ENCODE measurements at regions of chr4 and their contacts with region 1.

Region 1: GRCh38 chr4:173169428-173170181 is 994 bp downstream of the GALNT7 start:
- DNase-seq: peak; percentile 67
- ATAC-seq: peak; percentile 77 to 83

Region 2: DNA sequence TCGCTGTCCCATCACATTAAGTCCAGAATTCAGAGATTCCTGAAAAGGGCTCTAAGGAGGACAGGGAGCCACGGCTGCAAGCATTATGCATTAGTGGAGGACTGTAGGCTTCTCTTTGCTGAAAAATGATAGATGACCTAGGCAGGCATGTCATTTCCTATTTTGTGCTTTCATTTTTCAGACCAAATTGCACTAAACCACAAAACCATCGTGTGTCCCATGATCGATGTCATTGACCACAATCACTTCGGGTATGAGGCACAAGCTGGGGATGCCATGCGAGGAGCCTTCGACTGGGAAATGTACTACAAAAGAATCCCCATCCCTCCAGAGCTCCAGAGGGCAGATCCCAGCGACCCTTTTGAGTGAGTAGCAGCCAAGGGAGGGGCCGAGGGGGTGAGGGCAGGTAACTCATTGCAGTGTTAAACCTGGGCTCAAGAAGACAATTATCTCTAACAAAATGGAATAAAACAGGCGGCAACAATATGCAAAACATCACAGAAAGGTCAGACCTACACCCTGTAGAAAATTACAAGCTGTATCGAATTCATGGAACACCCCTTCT is 356.2 kb before region 1 on chr4:
- intact Hi-C with region 1: no loop called
- DNase-seq: no peak
- ATAC-seq: no peak

Region 3: GRCh38 chr4:173025131-173025530 is 144.5 kb before region 1 on chr4:
- intact Hi-C with region 1: loop called in 1 of 2 experiments (anchors 10 kb)
- DNase-seq: no peak
- ATAC-seq: peak in 1 of 2 donors; percentile 78

Region 4: DNA sequence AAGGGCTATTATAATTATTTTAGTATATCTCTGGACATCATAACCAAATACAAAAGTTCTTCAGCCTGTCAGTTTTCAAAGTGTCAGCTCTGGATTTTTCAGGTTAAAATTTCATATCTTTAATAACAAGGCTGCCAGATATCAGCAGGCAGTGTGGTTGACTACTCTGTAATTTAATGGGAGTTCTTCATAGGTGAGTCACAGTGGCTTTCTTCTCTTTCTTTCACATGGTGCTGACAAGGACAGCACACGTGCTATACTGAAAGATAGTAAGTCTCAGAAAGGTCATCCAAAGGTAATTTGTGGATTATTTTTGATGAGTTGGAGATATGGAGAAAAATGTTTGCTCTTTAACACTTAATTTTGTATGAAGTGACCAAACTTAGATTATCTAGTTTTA is 42.2 kb after region 1 on chr4:
- intact Hi-C with region 1: no loop called
- DNase-seq: no peak
- ATAC-seq: peak in 1 of 2 donors; percentile 96

Region 5: DNA sequence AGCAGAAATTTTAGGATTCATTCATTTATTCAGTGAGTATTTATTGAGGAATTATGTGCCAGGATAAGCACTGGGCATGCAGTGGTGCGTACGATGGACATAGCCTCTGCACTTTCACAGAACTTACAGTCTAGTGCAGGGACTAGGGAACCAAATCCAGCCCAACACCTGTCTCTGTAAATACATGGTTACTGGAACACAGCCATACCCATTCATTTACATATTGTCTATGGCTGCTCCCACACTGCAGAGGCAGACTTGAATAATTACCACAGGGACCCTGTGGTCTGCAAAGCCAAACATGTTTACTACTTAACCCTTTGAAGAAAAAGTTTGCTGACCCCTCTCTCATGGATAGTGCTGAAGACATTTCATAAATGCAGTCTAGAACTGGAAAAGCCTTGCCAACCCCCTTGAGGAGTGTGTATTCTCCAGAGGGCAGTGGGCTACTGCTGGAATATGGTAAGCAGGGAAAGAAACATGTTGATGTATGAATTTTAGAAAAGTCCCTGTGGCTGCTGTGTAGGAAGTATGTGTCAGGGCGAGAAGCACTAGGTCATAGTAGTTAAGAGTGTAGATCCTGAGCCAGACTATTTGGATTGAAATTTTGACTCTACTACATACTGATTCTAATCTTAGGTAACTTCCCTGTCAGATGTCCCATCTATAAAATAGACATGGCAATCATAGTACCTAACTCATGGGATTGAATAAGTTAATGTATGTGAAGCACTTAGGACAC is 74.5 kb after region 1 on chr4:
- intact Hi-C with region 1: no loop called
- DNase-seq: no peak
- ATAC-seq: no peak

Region 6: DNA sequence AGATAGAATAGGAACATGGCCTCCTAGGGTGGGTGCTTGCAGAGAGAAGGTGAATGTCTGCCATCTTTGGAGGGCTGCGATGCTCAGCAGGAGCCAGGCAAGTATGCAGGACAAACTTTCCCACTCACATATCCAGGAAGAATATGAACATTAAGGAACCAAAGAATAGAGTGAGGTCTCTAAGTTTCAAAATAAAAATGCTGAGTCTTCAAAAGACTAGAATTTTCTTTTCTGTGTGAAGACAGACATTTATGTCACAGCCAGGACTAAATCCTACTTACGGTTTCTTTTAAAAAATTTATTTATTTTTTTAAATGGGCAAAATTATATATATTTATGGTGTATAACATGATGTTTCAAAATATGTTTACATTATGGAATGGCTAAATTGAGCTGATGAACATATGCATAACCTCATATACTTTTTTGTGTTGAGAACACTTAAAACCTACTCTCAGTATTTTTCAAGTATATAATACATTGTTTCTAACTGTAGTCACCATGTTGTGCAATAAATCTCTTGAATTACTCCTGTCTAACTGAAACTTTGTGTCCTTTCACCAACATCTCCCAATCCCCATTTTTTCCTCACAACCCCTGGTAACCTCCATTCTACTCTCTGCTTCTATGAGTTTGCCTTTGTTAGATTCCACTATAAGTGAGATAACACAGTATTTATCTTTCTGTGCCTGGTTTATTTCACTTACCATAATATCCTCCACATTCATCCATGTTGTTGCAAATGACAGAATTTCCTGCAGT is 538.2 kb after region 1 on chr4:
- intact Hi-C with region 1: no loop called
- DNase-seq: no peak
- ATAC-seq: no peak